Heart right ventricle (tissue), 16 donors: ENCODE measurements at regions of chr1 and their contacts with region 1.

Region 1: DNA sequence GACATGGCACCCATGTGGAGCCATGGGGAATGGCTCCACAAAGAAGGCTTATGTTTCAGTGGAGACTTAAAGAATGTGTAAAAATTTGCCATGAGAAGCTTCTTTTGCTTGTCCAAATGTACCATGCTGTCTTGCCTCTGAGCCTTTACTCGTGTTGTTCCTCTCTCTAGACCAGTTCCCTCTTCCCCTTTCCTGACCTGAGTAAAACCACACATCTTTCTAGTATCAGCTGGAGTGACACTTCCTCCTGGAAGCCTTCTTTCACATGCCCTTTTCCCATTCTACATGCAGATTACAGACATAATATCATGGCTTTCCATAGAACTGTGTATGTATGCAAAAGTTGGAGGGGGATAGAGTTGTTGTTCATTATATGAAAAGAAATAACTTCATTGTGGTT is 13.6 kb upstream of the GPX7 start:
- DNase-seq: no peak
- ATAC-seq: peak in 1 of 8 donors; percentile 43
- H3K4me3 ChIP-seq: no peak overlapping the region
- H3K27ac ChIP-seq: no peak overlapping the region
- H3K4me1 ChIP-seq: peaks cover 0 to 12% (median 0%) of the 10 kb centered on the region in 9 donors
- H3K27me3 ChIP-seq: no peaks in the 10 kb centered on the region
- CTCF ChIP-seq: no peak

Region 2: GRCh38 chr1:52659356-52659755 is 70.8 kb after region 1 on chr1:
- intact Hi-C with region 1: loop called in 1 of 10 experiments (anchors 10 kb)
- DNase-seq: no peak
- ATAC-seq: no peak
- H3K4me3 ChIP-seq: no peak overlapping the region
- H3K27ac ChIP-seq: no peak overlapping the region
- H3K4me1 ChIP-seq: no peaks in the 10 kb centered on the region
- H3K27me3 ChIP-seq: no peaks in the 10 kb centered on the region
- CTCF ChIP-seq: no peak

Region 3: GRCh38 chr1:53134961-53135734 is 546.6 kb after region 1 on chr1:
- intact Hi-C with region 1: no loop called
- DNase-seq: no peak
- ATAC-seq: peak in 5 of 8 donors; percentile 18 to 69 (median 45)
- H3K4me3 ChIP-seq: no peak overlapping the region
- H3K27ac ChIP-seq: peak overlapping the region in 4 of 10 donors; percentile 13 to 57 (median 36)
- H3K4me1 ChIP-seq: peaks cover 0 to 27% (median 11%) of the 10 kb centered on the region in 9 donors
- H3K27me3 ChIP-seq: no peaks in the 10 kb centered on the region
- CTCF ChIP-seq: no peak